Activated T-helper 1 cell treated with anti-CD3 and anti-CD28 coated beads, Interleukin-12 subunit alpha, Interleukin-12 subunit beta, Interleukin-2, Interleukin-4 antibody, amounts not matched to agents 30 ng/mL and 10 ng/mL and 1 ng/mL, durations not matched to agents 14 hours and 24 hours and 36 hours (primary cell): ENCODE measurements at regions of chr4 and their contacts with region 1.

Region 1: GRCh38 chr4:103008875-103009729 is 10.4 kb downstream of the SLC9B1 start:
- DNase-seq: peak; percentile 32
- H3K4me3 Mint-ChIP-seq: no peak overlapping the region
- H3K27ac Mint-ChIP-seq: no peak overlapping the region
- H3K4me1 Mint-ChIP-seq: no peaks in the 10 kb centered on the region
- H3K27me3 Mint-ChIP-seq: peaks cover 4% of the 10 kb centered on the region

Region 2: GRCh38 chr4:102263011-102263787 is 745.9 kb before region 1 on chr4:
- intact Hi-C with region 1: loop called (anchors 10 kb)
- DNase-seq: no peak
- H3K4me3 Mint-ChIP-seq: no peak overlapping the region
- H3K27ac Mint-ChIP-seq: peak overlapping the region; percentile 19
- H3K4me1 Mint-ChIP-seq: peaks cover 16% of the 10 kb centered on the region
- H3K27me3 Mint-ChIP-seq: no peaks in the 10 kb centered on the region

Region 3: GRCh38 chr4:102449751-102450352 is 559.2 kb before region 1 on chr4:
- intact Hi-C with region 1: loop called (anchors 1 kb)
- DNase-seq: peak; percentile 52
- H3K4me3 Mint-ChIP-seq: no peak overlapping the region
- H3K27ac Mint-ChIP-seq: no peak overlapping the region
- H3K4me1 Mint-ChIP-seq: peaks cover 36% of the 10 kb centered on the region
- H3K27me3 Mint-ChIP-seq: peaks cover under 1% of the 10 kb centered on the region

Region 4: GRCh38 chr4:103091601-103092223 is 82.6 kb after region 1 on chr4:
- intact Hi-C with region 1: loop called (anchors 1 kb)
- DNase-seq: peak; percentile 27
- H3K4me3 Mint-ChIP-seq: peak overlapping the region; percentile 71
- H3K27ac Mint-ChIP-seq: peak overlapping the region; percentile 73
- H3K4me1 Mint-ChIP-seq: peaks cover 26% of the 10 kb centered on the region
- H3K27me3 Mint-ChIP-seq: no peaks in the 10 kb centered on the region